ENCODE measurements at regions of chr16 and their contacts with region 1.

Region 1: DNA sequence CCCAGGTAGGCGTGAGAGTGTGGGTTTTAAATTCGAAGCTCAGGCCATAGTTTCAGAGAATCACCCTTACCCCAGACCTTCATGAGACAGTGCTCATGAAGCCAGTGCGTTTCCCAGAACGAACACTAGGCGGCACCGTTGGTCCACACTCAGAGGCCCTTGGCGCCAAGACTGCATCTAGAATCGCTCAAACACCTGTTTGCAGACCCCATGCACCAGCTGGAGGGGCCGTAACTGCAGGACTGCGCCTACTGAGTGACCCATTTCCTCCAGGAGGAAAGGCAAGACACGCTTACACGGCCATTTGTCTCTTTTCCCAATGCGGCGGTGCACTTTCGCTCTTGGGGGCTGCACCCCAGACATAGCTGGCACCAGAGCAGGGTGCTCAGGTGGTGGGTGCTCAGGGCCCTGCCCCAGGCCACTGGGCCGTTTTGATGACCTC is 34.0 kb downstream of the ADGRG5 start:
- DNase-seq: peak; percentile 95
- ATAC-seq: peak; percentile 66
- H3K4me3 Mint-ChIP-seq: no peak overlapping the region
- H3K27ac Mint-ChIP-seq: peak overlapping the region; percentile 88
- H3K4me1 Mint-ChIP-seq: peaks cover 48% of the 10 kb centered on the region
- H3K27me3 Mint-ChIP-seq: no peaks in the 10 kb centered on the region
- CTCF ChIP-seq: peak; percentile 98

Region 2: DNA sequence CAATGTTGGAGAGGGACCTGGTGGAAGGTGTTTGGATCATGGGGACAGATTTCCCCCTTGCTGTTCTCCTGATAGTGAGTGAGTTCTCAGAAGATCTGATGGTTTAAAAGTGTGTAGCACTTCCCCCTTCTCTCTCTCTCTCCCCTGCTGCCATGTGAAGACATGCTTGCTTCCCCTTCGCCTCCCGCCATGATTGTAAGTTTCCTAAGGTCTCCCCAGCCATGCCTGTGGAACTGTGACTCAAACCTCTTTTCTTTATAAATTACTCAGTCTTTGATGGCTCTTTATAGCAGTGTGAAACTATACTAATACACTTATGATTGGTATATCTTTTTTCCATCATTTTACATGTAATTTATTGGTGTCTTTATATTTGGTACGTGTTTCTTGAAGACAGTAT is 20.6 kb before region 1 on chr16:
- CTCF ChIA-PET with region 1: interaction called, 21 read pairs
- POLR2A ChIA-PET with region 1: no interaction called
- intact Hi-C with region 1: no loop called
- DNase-seq: no peak
- ATAC-seq: peak; percentile 45
- H3K4me3 Mint-ChIP-seq: no peak overlapping the region
- H3K27ac Mint-ChIP-seq: no peak overlapping the region
- H3K4me1 Mint-ChIP-seq: peaks cover 17% of the 10 kb centered on the region
- H3K27me3 Mint-ChIP-seq: no peaks in the 10 kb centered on the region
- CTCF ChIP-seq: no peak

Region 3: DNA sequence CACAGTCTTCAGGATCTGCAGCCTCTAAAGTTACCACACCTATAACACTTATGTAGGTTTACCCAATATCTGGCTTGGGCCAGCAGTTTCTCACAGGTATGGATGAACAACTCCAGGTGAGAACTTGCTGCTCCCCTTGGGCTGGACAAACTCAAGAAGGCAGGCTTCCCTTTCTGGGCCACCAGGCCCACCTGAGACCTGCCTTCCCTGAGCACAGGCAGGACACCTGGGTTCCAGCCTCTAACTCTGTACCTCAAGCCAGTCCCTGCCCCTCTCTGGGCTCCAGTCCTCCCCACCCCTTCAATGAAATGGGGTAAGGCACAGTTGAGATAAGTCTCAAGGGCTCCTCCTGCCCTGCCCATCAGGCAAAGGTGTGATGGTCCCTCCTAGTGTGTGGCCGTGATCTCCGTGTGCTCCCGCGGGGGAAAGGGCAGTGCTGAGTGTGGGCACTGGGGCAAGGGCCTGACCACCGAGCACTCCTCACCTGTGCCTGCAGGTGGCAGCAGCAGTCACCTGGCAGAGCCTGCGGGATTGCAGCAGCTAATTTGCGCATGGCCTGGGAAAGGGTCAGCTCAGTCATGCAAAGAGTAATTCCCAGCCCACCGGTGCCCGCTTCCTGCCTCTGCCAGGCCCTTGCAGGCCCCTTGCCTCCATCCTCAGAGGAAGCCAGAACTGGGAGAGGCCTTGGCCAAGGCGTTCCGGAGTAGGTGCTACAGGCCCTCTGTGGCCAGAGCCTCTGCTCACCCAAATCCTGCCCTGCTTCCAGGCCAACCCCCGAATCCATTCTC is 23.8 kb after region 1 on chr16:
- CTCF ChIA-PET with region 1: interaction called, 180 read pairs
- POLR2A ChIA-PET with region 1: interaction called, 5 read pairs
- intact Hi-C with region 1: no loop called
- DNase-seq: peak; percentile 61
- ATAC-seq: peak; percentile 19
- H3K4me3 Mint-ChIP-seq: no peak overlapping the region
- H3K27ac Mint-ChIP-seq: peak overlapping the region; percentile 71
- H3K4me1 Mint-ChIP-seq: peaks cover 57% of the 10 kb centered on the region
- H3K27me3 Mint-ChIP-seq: no peaks in the 10 kb centered on the region
- CTCF ChIP-seq: peak; percentile 81

Region 4: GRCh38 chr16:57648590-57649442 is 72.4 kb after region 1 on chr16:
- CTCF ChIA-PET with region 1: interaction called, 265 read pairs
- POLR2A ChIA-PET with region 1: interaction called, 48 read pairs
- intact Hi-C with region 1: loop called (anchors 1 kb)
- DNase-seq: peak; percentile 94
- ATAC-seq: peak; percentile 73
- H3K4me3 Mint-ChIP-seq: no peak overlapping the region
- H3K27ac Mint-ChIP-seq: peak overlapping the region; percentile 86
- H3K4me1 Mint-ChIP-seq: peaks cover 33% of the 10 kb centered on the region
- H3K27me3 Mint-ChIP-seq: no peaks in the 10 kb centered on the region
- CTCF ChIP-seq: peak; percentile 100

Region 5: DNA sequence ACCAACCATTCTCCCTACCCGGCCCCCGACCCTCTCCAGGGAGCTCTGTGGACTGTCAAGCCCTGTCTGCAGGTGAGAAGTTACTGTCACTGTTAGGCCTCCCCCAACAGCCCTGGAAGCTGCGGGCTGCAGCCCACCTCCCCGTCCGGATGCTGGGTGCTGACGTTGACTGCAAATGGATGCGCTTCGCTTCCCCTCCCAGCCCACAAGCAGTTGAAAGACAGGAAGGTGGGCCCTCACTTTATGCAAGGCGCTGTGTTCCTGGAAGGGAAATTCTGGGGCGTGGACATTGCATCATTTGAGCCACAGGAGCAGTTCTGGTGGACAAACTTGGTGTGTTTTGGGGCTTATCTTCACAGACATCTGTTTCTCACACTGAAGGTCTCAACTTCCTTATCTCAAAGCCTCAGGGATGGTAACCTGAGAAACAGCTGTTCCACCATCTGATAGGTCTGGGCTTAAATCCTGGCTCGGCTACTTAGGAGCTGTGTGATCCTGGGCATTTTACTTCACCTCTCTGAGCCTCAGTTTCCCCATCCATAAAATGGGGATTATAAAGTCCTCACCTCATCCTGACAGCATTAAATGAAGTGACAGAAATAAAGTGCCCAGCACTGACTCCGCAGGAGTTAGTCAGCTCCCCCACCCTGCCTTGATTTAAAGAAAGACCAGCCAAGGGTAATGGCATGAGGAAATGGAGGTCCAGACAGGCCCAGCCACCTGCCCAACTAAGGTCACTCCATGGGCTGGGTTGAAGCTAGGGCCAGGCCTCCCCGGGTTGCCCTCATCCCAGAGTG is 113.5 kb after region 1 on chr16:
- CTCF ChIA-PET with region 1: interaction called, 11 read pairs
- POLR2A ChIA-PET with region 1: no interaction called
- intact Hi-C with region 1: no loop called
- DNase-seq: peak; percentile 74
- ATAC-seq: peak; percentile 84
- H3K4me3 Mint-ChIP-seq: peak overlapping the region; percentile 60
- H3K27ac Mint-ChIP-seq: peak overlapping the region; percentile 88
- H3K4me1 Mint-ChIP-seq: peaks cover 25% of the 10 kb centered on the region
- H3K27me3 Mint-ChIP-seq: no peaks in the 10 kb centered on the region
- CTCF ChIP-seq: no peak

Region 6: GRCh38 chr16:57700781-57701551 is 124.5 kb after region 1 on chr16:
- CTCF ChIA-PET with region 1: no interaction called
- POLR2A ChIA-PET with region 1: no interaction called
- intact Hi-C with region 1: no loop called
- DNase-seq: no peak
- ATAC-seq: no peak
- H3K4me3 Mint-ChIP-seq: no peak overlapping the region
- H3K27ac Mint-ChIP-seq: no peak overlapping the region
- H3K4me1 Mint-ChIP-seq: no peaks in the 10 kb centered on the region
- H3K27me3 Mint-ChIP-seq: no peaks in the 10 kb centered on the region
- CTCF ChIP-seq: no peak

Region 7: GRCh38 chr16:57734925-57735754 is 158.7 kb after region 1 on chr16:
- CTCF ChIA-PET with region 1: interaction called, 27 read pairs
- POLR2A ChIA-PET with region 1: interaction called, 4 read pairs
- intact Hi-C with region 1: no loop called
- DNase-seq: peak; percentile 99
- ATAC-seq: peak; percentile 93
- H3K4me3 Mint-ChIP-seq: peak overlapping the region; percentile 99
- H3K27ac Mint-ChIP-seq: peak overlapping the region; percentile 98
- H3K4me1 Mint-ChIP-seq: peaks cover 18% of the 10 kb centered on the region
- H3K27me3 Mint-ChIP-seq: no peaks in the 10 kb centered on the region
- CTCF ChIP-seq: no peak